HCT116 (cell line): ENCODE measurements at regions of chr7 and their contacts with region 1.

Region 1: GRCh38 chr7:154744256-154744860 is 258.6 kb downstream of the PAXIP1 start:
- DNase-seq: no peak
- ATAC-seq: peak; percentile 79
- H3K4me3 ChIP-seq: no peak overlapping the region
- H3K27ac ChIP-seq: no peak overlapping the region
- H3K4me1 ChIP-seq: no peaks in the 10 kb centered on the region
- H3K27me3 ChIP-seq: no peaks in the 10 kb centered on the region
- CTCF ChIP-seq: peak; percentile 20 to 94 (median 86); a peak in 5 of 6 replicates
- POLR2A ChIP-seq: no peak
- RAD21 ChIP-seq: peak; percentile 54

Region 2: GRCh38 chr7:152894273-152895170 is 1849.8 kb before region 1 on chr7:
- CTCF ChIA-PET with region 1: interaction called, 3 read pairs
- POLR2A ChIA-PET with region 1: no interaction called
- RAD21 ChIA-PET with region 1: no interaction called
- intact Hi-C with region 1: loop called (anchors 1 kb)
- DNase-seq: no peak
- ATAC-seq: peak; percentile 94
- H3K4me3 ChIP-seq: no peak overlapping the region
- H3K27ac ChIP-seq: no peak overlapping the region
- H3K4me1 ChIP-seq: no peaks in the 10 kb centered on the region
- H3K27me3 ChIP-seq: no peaks in the 10 kb centered on the region
- CTCF ChIP-seq: peak; percentile 43 to 79 (median 77); a peak in 5 of 6 replicates
- POLR2A ChIP-seq: no peak
- RAD21 ChIP-seq: peak; percentile 80

Region 3: GRCh38 chr7:153090764-153091163 is 1653.6 kb before region 1 on chr7:
- CTCF ChIA-PET with region 1: no interaction called
- POLR2A ChIA-PET with region 1: no interaction called
- RAD21 ChIA-PET with region 1: no interaction called
- intact Hi-C with region 1: loop called (anchors 1 kb)
- DNase-seq: no peak
- ATAC-seq: no peak; the same call in 1 of the 2 replicates
- H3K4me3 ChIP-seq: no peak overlapping the region
- H3K27ac ChIP-seq: no peak overlapping the region
- H3K4me1 ChIP-seq: no peaks in the 10 kb centered on the region
- H3K27me3 ChIP-seq: 0 out of 2 replicates have a peak, but pooled peaks cover 6% of the 10 kb centered on the region
- CTCF ChIP-seq: peak in 2 of 3 experiments; percentile 11 to 39; a peak in 3 of 6 replicates
- POLR2A ChIP-seq: no peak
- RAD21 ChIP-seq: peak; percentile 56

Region 4: GRCh38 chr7:154698726-154699291 is 45.5 kb before region 1 on chr7:
- CTCF ChIA-PET with region 1: no interaction called
- POLR2A ChIA-PET with region 1: no interaction called
- RAD21 ChIA-PET with region 1: no interaction called
- intact Hi-C with region 1: loop called (anchors 2 kb)
- DNase-seq: no peak
- ATAC-seq: peak; percentile 52
- H3K4me3 ChIP-seq: no peak overlapping the region
- H3K27ac ChIP-seq: no peak overlapping the region
- H3K4me1 ChIP-seq: 0 out of 4 replicates have a peak, but pooled peaks cover 0 to 4% of the 10 kb centered on the region in 2 experiments
- H3K27me3 ChIP-seq: no peaks in the 10 kb centered on the region
- CTCF ChIP-seq: peak in 2 of 3 experiments; percentile 56 to 62; a peak in 4 of 6 replicates
- POLR2A ChIP-seq: no peak
- RAD21 ChIP-seq: no peak